Posterior vena cava (tissue), 2 donors: ENCODE measurements at regions of chr2 and their contacts with region 1.

Region 1: GRCh38 chr2:30351116-30351515 is 95.9 kb upstream of the LCLAT1 start:
- DNase-seq: no peak

Region 2: GRCh38 chr2:30231212-30231995 is 119.7 kb before region 1 on chr2 and contains the start of gene LBH:
- intact Hi-C with region 1: loop called in 1 of 2 experiments (anchors 10 kb)
- DNase-seq: peak; percentile 95
- total RNA-seq, gene LBH: 104 to 280 TPM